AG04449 (cell line): ENCODE measurements at regions of chr6 and their contacts with region 1.

Region 1: GRCh38 chr6:150068720-150069648 is at the start of gene ULBP3:
- DNase-seq: peak; percentile 68
- H3K4me3 ChIP-seq: peak within 1 kb of the TSS; percentile 76
- CTCF ChIP-seq: peak; percentile 75

Region 2: GRCh38 chr6:150053450-150053849 is 15.5 kb before region 1 on chr6:
- CTCF ChIA-PET with region 1: interaction called, 10 read pairs
- POLR2A ChIA-PET with region 1: interaction called, 5 read pairs
- DNase-seq: no peak
- H3K4me3 ChIP-seq: no peak overlapping the region
- CTCF ChIP-seq: no peak

Region 3: GRCh38 chr6:150334790-150335783 is 266.1 kb after region 1 on chr6:
- CTCF ChIA-PET with region 1: interaction called, 33 read pairs
- POLR2A ChIA-PET with region 1: no interaction called
- DNase-seq: peak; percentile 46
- H3K4me3 ChIP-seq: no peak overlapping the region
- CTCF ChIP-seq: peak; percentile 71

Region 4: GRCh38 chr6:150352321-150353291 is 283.6 kb after region 1 on chr6:
- CTCF ChIA-PET with region 1: interaction called, 10 read pairs
- POLR2A ChIA-PET with region 1: no interaction called
- DNase-seq: peak; percentile 41
- H3K4me3 ChIP-seq: no peak overlapping the region
- CTCF ChIP-seq: peak; percentile 11